ENCODE measurements at regions of chr6 and their contacts with region 1.

Region 1: GRCh38 chr6:142474531-142475289 is 172.9 kb downstream of the ADGRG6 start:
- DNase-seq: peak; percentile 72
- H3K4me3 Mint-ChIP-seq: no peak overlapping the region
- H3K27ac Mint-ChIP-seq: no peak overlapping the region
- H3K4me1 Mint-ChIP-seq: peaks cover 7% of the 10 kb centered on the region
- H3K27me3 Mint-ChIP-seq: peaks cover 5% of the 10 kb centered on the region
- CTCF ChIP-seq: peak; percentile 66

Region 2: GRCh38 chr6:142146828-142147662 is 327.7 kb before region 1 on chr6 and contains the starts of genes NMBR and VTA1:
- CTCF ChIA-PET with region 1: interaction called, 3 read pairs
- POLR2A ChIA-PET with region 1: no interaction called
- intact Hi-C with region 1: loop called (anchors 5 kb)
- DNase-seq: peak; percentile 98
- H3K4me3 Mint-ChIP-seq: peak within 1 kb of the TSS; percentile 97
- H3K27ac Mint-ChIP-seq: peak within 1 kb of the TSS; percentile 92
- H3K4me1 Mint-ChIP-seq: peaks cover 36% of the 10 kb centered on the region
- H3K27me3 Mint-ChIP-seq: no peaks in the 10 kb centered on the region
- CTCF ChIP-seq: peak; percentile 87
- total RNA-seq, gene NMBR: not detected in 2 replicates
- total RNA-seq, gene VTA1: 42.9 and 43.5 TPM in 2 replicates

Region 3: GRCh38 chr6:142459271-142459670 is 15.4 kb before region 1 on chr6:
- CTCF ChIA-PET with region 1: interaction called, 14 read pairs
- POLR2A ChIA-PET with region 1: no interaction called
- intact Hi-C with region 1: no loop called
- DNase-seq: no peak
- H3K4me3 Mint-ChIP-seq: no peak overlapping the region
- H3K27ac Mint-ChIP-seq: no peak overlapping the region
- H3K4me1 Mint-ChIP-seq: no peaks in the 10 kb centered on the region
- H3K27me3 Mint-ChIP-seq: no peaks in the 10 kb centered on the region
- CTCF ChIP-seq: no peak

Region 4: GRCh38 chr6:142537612-142538478 is 63.1 kb after region 1 on chr6:
- CTCF ChIA-PET with region 1: interaction called, 5 read pairs
- POLR2A ChIA-PET with region 1: no interaction called
- intact Hi-C with region 1: loop called (anchors 1 kb)
- DNase-seq: peak; percentile 62
- H3K4me3 Mint-ChIP-seq: no peak overlapping the region
- H3K27ac Mint-ChIP-seq: no peak overlapping the region
- H3K4me1 Mint-ChIP-seq: peaks cover 6% of the 10 kb centered on the region
- H3K27me3 Mint-ChIP-seq: no peaks in the 10 kb centered on the region
- CTCF ChIP-seq: peak; percentile 51

Region 5: GRCh38 chr6:142566628-142567396 is 92.1 kb after region 1 on chr6:
- CTCF ChIA-PET with region 1: interaction called, 16 read pairs
- POLR2A ChIA-PET with region 1: no interaction called
- intact Hi-C with region 1: loop called (anchors 2 kb)
- DNase-seq: peak; percentile 73
- H3K4me3 Mint-ChIP-seq: no peak overlapping the region
- H3K27ac Mint-ChIP-seq: no peak overlapping the region
- H3K4me1 Mint-ChIP-seq: peaks cover 27% of the 10 kb centered on the region
- H3K27me3 Mint-ChIP-seq: no peaks in the 10 kb centered on the region
- CTCF ChIP-seq: peak; percentile 76

Region 6: GRCh38 chr6:143146186-143146851 is 671.6 kb after region 1 on chr6:
- CTCF ChIA-PET with region 1: no interaction called
- POLR2A ChIA-PET with region 1: no interaction called
- intact Hi-C with region 1: no loop called
- DNase-seq: no peak
- H3K4me3 Mint-ChIP-seq: no peak overlapping the region
- H3K27ac Mint-ChIP-seq: no peak overlapping the region
- H3K4me1 Mint-ChIP-seq: no peaks in the 10 kb centered on the region
- H3K27me3 Mint-ChIP-seq: no peaks in the 10 kb centered on the region
- CTCF ChIP-seq: no peak

Region 7: DNA sequence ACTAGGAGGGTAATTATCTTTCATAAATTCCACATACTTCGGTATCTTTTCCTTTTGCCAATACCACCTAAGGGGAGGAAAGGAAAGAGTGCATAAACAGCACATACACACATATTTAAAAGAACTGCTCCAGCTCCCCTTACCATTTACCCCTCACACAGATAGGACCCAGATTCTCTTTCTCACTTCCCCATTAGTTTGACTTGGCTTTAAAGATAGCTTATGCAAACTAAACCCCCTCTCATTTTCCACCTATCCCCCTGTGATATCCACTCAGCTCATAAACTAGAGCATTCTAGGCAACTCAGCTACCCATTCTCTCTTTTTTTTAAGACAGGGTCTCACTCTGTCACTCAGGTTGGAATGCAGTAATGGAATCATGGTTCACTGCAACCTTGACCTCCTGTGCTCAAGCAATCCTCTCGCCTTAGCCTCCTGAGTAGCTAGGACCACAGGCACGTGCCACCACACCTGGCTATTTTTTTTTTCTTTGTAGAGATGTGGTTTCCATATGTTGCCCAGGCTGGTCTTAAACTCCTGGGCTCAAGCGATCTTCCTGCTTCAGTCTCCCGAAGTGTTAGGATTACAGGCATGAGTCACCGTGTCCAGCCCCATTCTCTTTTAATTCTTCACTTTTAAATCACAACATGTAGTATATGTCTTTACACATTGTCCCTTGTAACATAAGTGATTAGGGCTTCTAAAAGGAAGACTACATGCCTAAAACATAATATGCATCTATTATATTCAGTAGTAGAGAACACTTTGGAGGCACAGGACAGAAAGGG is 1032.8 kb after region 1 on chr6:
- CTCF ChIA-PET with region 1: no interaction called
- POLR2A ChIA-PET with region 1: no interaction called
- intact Hi-C with region 1: loop called (anchors 10 kb)
- DNase-seq: peak; percentile 34
- H3K4me3 Mint-ChIP-seq: no peak overlapping the region
- H3K27ac Mint-ChIP-seq: no peak overlapping the region
- H3K4me1 Mint-ChIP-seq: peaks cover 24% of the 10 kb centered on the region
- H3K27me3 Mint-ChIP-seq: no peaks in the 10 kb centered on the region
- CTCF ChIP-seq: no peak

Measured in MCF 10A (cell line).